Natural killer cell (primary cell): ENCODE measurements at regions of chr13 and their contacts with region 1.

Region 1: GRCh38 chr13:113208424-113209335 is at the start of gene PCID2:
- DNase-seq: peak; percentile 93 to 96
- ATAC-seq: peak; percentile 76 to 88 (median 76)
- H3K4me3 ChIP-seq: peak within 1 kb of the TSS; percentile 75
- H3K4me3 Mint-ChIP-seq: peak within 1 kb of the TSS; percentile 89
- H3K27ac ChIP-seq: peak within 1 kb of the TSS; percentile 99
- H3K27ac Mint-ChIP-seq: peak within 1 kb of the TSS; percentile 77 to 88
- H3K4me1 ChIP-seq: peaks cover 35% of the 10 kb centered on the region
- H3K4me1 Mint-ChIP-seq: peaks cover 49 to 56% of the 10 kb centered on the region in 2 donors
- H3K27me3 ChIP-seq: no peaks in the 10 kb centered on the region
- H3K27me3 Mint-ChIP-seq: no peaks in the 10 kb centered on the region
- CTCF ChIP-seq: no peak
- total RNA-seq, gene PCID2: 26.4 to 68.9 (median 42.3) TPM

Region 2: GRCh38 chr13:113153810-113154748 is 54.6 kb before region 1 on chr13:
- intact Hi-C with region 1: loop called (anchors 2 kb)
- DNase-seq: peak; percentile 62 to 89
- ATAC-seq: peak; percentile 78 to 84 (median 83)
- H3K4me3 ChIP-seq: peak overlapping the region; percentile 41
- H3K4me3 Mint-ChIP-seq: peak overlapping the region; percentile 80
- H3K27ac ChIP-seq: peak overlapping the region; percentile 43
- H3K27ac Mint-ChIP-seq: peak overlapping the region; percentile 80 to 83
- H3K4me1 ChIP-seq: peaks cover 28% of the 10 kb centered on the region
- H3K4me1 Mint-ChIP-seq: peaks cover 23 to 27% of the 10 kb centered on the region in 2 donors
- H3K27me3 ChIP-seq: peaks cover 15% of the 10 kb centered on the region
- H3K27me3 Mint-ChIP-seq: peaks cover 0 to 21% of the 10 kb centered on the region in 2 donors
- CTCF ChIP-seq: no peak

Region 3: GRCh38 chr13:113296842-113297369 is 88.2 kb after region 1 on chr13 and contains the start of gene LAMP1:
- intact Hi-C with region 1: loop called (anchors 5 kb)
- DNase-seq: peak; percentile 98 to 100
- ATAC-seq: peak; percentile 76 to 90 (median 82)
- H3K4me3 ChIP-seq: peak within 1 kb of the TSS; percentile 89
- H3K4me3 Mint-ChIP-seq: peak within 1 kb of the TSS; percentile 100
- H3K27ac ChIP-seq: peak within 1 kb of the TSS; percentile 92
- H3K27ac Mint-ChIP-seq: peak within 1 kb of the TSS; percentile 89 to 99
- H3K4me1 ChIP-seq: peaks cover 29% of the 10 kb centered on the region
- H3K4me1 Mint-ChIP-seq: peaks cover 32 to 33% of the 10 kb centered on the region in 2 donors
- H3K27me3 ChIP-seq: peaks cover 2% of the 10 kb centered on the region
- H3K27me3 Mint-ChIP-seq: peaks cover 17 to 22% of the 10 kb centered on the region in 2 donors
- CTCF ChIP-seq: no peak
- total RNA-seq, gene LAMP1: 137 to 168 (median 159) TPM

Region 4: DNA sequence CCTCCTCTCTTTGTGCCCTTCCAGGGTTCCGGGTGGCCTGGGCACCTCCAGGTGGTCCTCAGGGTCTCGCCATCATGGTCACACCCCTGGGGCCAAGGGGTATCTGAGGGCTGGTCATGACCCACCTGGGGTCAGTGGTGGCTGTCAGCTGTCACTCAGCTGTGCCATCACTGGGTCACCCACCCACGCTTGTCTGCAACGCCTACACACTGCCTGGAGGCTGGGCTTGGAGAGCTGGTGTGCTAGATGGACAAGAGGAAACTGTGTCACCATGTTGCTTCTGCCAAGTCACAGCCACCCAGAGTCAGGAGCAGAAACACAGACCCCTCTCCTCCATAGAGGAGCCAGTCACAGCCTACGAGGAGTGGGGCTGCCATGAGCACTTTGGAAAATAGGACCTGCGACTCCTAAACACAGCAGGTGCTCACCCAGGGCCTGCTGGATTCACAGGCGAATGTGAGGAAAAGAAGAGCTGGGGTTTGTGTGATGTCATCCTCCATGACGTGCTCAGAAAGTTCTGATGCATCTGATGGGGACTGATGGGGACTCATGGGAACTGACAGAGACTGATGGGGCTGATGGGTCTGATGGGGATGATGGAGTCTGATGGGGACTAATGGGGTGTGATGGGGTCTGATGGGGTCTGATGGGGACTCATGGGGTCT is 166.0 kb after region 1 on chr13:
- intact Hi-C with region 1: no loop called
- DNase-seq: no peak
- ATAC-seq: no peak
- H3K4me3 ChIP-seq: no peak overlapping the region
- H3K4me3 Mint-ChIP-seq: no peak overlapping the region
- H3K27ac ChIP-seq: no peak overlapping the region
- H3K27ac Mint-ChIP-seq: no peak overlapping the region
- H3K4me1 ChIP-seq: no peaks in the 10 kb centered on the region
- H3K4me1 Mint-ChIP-seq: no peaks in the 10 kb centered on the region
- H3K27me3 ChIP-seq: no peaks in the 10 kb centered on the region
- H3K27me3 Mint-ChIP-seq: peaks cover 0 to 7% of the 10 kb centered on the region in 2 donors
- CTCF ChIP-seq: no peak